ENCODE measurements at regions of chrX and their contacts with region 1.

Region 1: GRCh38 chrX:112259375-112259774 is 176.8 kb upstream of the TRPC5 start:
- DNase-seq: no peak
- ATAC-seq: no peak
- H3K4me3 ChIP-seq: no peak overlapping the region
- H3K27ac ChIP-seq: no peak overlapping the region
- H3K4me1 ChIP-seq: no peaks in the 10 kb centered on the region
- H3K27me3 ChIP-seq: no peaks in the 10 kb centered on the region
- CTCF ChIP-seq: no peak

Region 2: DNA sequence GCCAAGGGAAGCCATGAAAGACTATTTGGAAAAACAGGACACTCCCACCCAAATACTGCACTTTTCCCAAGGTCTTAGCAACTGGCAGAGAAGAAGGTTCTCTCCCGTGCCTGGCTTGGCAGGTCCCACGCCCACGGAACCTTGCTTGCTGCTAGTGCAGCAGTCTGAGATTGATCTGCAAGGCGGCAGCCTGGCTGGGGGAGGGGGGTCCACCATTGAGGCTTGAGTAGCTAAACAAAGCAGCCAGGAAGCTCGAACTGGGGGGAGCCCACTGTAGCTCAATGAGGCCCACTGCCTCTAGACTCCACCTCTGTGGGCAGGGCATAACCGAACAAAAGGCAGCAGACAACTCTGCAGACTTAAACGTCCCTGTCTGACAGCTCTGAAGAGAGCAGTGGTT is 474.7 kb before region 1 on chrX:
- CTCF ChIA-PET with region 1: no interaction called
- POLR2A ChIA-PET with region 1: no interaction called
- in situ Hi-C with region 1: no loop called
- intact Hi-C with region 1: no loop called
- DNase-seq: no peak
- ATAC-seq: no peak
- H3K4me3 ChIP-seq: no peak overlapping the region
- H3K27ac ChIP-seq: no peak overlapping the region
- H3K4me1 ChIP-seq: no peaks in the 10 kb centered on the region
- H3K27me3 ChIP-seq: no peaks in the 10 kb centered on the region
- CTCF ChIP-seq: no peak

Region 3: GRCh38 chrX:112270991-112271390 is 11.6 kb after region 1 on chrX:
- CTCF ChIA-PET with region 1: no interaction called
- POLR2A ChIA-PET with region 1: no interaction called
- in situ Hi-C with region 1: no loop called
- intact Hi-C with region 1: loop called (anchors 1 kb)
- DNase-seq: no peak
- ATAC-seq: no peak
- H3K4me3 ChIP-seq: no peak overlapping the region
- H3K27ac ChIP-seq: no peak overlapping the region
- H3K4me1 ChIP-seq: no peaks in the 10 kb centered on the region
- H3K27me3 ChIP-seq: no peaks in the 10 kb centered on the region
- CTCF ChIP-seq: no peak

Measured in Panc1 (cell line).